ENCODE measurements at regions of chr5 and their contacts with region 1.

Region 1: GRCh38 chr5:103041071-103041676 is 78.8 kb downstream of the GIN1 start:
- DNase-seq: no peak
- ATAC-seq: peak in 1 of 2 donors; percentile 66
- H3K4me3 ChIP-seq: no peak overlapping the region
- H3K27ac ChIP-seq: no peak overlapping the region
- H3K4me1 ChIP-seq: no peaks in the 10 kb centered on the region
- H3K27me3 ChIP-seq: no peaks in the 10 kb centered on the region
- CTCF ChIP-seq: peak; percentile 50 to 71 (median 61)
- POLR2A ChIP-seq: no peak

Region 2: GRCh38 chr5:102536323-102536928 is 504.7 kb before region 1 on chr5:
- in situ Hi-C with region 1: no loop called
- intact Hi-C with region 1: loop called (anchors 2 kb)
- DNase-seq: no peak
- ATAC-seq: no peak
- H3K4me3 ChIP-seq: no peak overlapping the region
- H3K27ac ChIP-seq: no peak overlapping the region
- H3K4me1 ChIP-seq: no peaks in the 10 kb centered on the region
- H3K27me3 ChIP-seq: no peaks in the 10 kb centered on the region
- CTCF ChIP-seq: no peak
- POLR2A ChIP-seq: no peak

Region 3: DNA sequence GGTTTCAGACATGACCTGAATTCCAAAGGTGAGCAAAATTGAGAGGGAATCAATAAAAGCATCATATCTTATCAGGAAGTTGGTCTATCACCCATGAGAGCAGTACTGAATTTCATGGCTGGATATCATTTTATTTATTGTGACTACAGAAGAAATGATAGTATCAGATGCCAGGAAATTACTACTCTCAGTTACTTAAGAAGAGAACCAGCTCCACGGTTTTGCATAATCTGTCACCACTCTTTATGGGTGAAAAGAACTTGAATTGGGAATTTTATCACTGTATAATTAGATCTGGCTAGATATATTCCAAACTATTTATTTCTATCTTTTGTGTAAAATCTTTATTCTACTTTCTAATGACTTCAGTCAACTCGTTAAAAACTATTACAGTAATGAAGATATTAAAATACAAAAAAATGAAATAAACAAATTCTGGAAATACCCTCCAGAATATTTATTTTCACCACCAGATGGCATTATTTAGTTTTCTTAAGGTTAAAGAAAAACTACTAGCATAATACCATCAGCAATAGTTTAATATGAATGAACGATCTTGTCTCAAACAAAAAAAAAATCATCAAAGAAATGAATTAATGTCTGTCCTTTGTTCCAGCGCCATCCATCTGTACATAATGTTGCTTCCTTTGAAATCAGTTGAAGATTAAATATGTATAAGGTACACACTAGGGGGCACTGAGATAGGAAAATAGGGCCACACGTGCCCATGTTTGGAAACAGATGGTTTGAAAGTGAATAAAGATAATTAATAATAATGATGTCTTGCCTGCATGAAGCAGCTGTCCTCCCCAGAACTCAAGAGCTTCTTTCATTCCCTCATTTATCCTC is 457.7 kb before region 1 on chr5:
- in situ Hi-C with region 1: loop called in 3 of 4 experiments (anchors 5 to 25 kb)
- intact Hi-C with region 1: loop called (anchors 1 kb)
- DNase-seq: no peak
- ATAC-seq: no peak
- H3K4me3 ChIP-seq: no peak overlapping the region
- H3K27ac ChIP-seq: no peak overlapping the region
- H3K4me1 ChIP-seq: no peaks in the 10 kb centered on the region
- H3K27me3 ChIP-seq: no peaks in the 10 kb centered on the region
- CTCF ChIP-seq: peak in 4 of 5 experiments; percentile 16 to 42 (median 37)
- POLR2A ChIP-seq: no peak

Region 4: GRCh38 chr5:102589661-102590060 is 451.5 kb before region 1 on chr5:
- in situ Hi-C with region 1: loop called in 3 of 4 experiments (anchors 5 to 25 kb)
- intact Hi-C with region 1: loop called (anchors 1 kb)
- DNase-seq: no peak
- ATAC-seq: no peak
- H3K4me3 ChIP-seq: no peak overlapping the region
- H3K27ac ChIP-seq: no peak overlapping the region
- H3K4me1 ChIP-seq: no peaks in the 10 kb centered on the region
- H3K27me3 ChIP-seq: no peaks in the 10 kb centered on the region
- CTCF ChIP-seq: no peak
- POLR2A ChIP-seq: no peak

Region 5: DNA sequence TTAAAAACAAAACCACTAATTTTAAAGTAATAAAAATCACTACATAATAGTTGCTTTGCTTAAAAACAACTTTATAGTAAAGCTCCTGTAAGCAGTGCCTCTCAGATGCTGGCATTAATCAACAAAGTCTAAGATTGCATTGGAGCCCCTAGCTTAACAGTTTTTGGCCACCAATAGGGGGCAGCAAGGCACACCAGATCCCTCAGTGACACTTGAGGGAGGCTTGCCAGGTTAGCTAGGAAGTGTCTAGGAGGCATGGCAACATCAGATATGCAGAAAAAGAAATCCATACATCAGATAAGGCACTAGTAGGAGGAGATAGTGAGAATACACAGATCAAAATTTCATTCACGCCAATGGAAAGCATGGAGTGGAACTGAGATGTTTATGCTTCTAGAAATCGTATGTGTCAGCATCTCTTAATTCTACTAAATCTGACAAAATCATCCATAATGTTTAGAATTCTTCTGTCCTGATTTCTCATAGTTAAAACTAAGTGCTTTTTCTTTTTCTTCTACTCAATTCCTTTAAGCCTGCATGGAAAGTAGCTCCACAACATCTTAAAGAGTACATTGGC is 359.7 kb before region 1 on chr5:
- in situ Hi-C with region 1: loop called in 2 of 4 experiments (anchors 10 to 25 kb)
- intact Hi-C with region 1: loop called (anchors 1 kb)
- DNase-seq: peak; percentile 44 to 62
- ATAC-seq: peak; percentile 86 to 88
- H3K4me3 ChIP-seq: no peak overlapping the region
- H3K27ac ChIP-seq: no peak overlapping the region
- H3K4me1 ChIP-seq: no peaks in the 10 kb centered on the region
- H3K27me3 ChIP-seq: no peaks in the 10 kb centered on the region
- CTCF ChIP-seq: peak; percentile 54 to 79 (median 73)
- POLR2A ChIP-seq: no peak

Region 6: DNA sequence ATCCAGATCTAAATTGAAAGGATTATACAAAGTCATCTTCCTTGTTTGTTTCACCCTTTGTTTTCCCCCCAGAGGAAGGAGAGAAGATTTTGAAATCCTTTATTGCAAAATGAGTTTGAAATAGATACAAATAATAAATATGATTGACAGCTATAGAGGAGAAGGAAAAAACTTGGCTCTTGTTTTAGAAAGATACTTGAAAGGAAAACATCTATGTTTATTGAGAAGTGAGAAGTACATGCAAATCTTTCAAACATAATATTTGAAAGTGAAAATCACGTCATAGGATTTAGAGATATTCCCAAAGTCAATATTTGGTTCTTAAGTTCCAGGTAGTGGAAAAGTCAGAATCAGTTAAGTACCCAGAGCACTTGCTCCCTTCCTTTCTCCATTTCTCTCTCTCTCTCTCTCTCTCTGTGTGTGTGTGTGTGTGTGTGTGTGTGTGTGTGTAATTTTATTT is 258.8 kb before region 1 on chr5:
- in situ Hi-C with region 1: no loop called
- intact Hi-C with region 1: loop called (anchors 2 kb)
- DNase-seq: no peak
- ATAC-seq: peak; percentile 46 to 57
- H3K4me3 ChIP-seq: peak overlapping the region in 2 of 4 donors; percentile 6 to 11
- H3K27ac ChIP-seq: peak overlapping the region; percentile 65 to 78 (median 76)
- H3K4me1 ChIP-seq: peaks cover 49 to 59% of the 10 kb centered on the region in 2 donors
- H3K27me3 ChIP-seq: no peaks in the 10 kb centered on the region
- CTCF ChIP-seq: no peak
- POLR2A ChIP-seq: no peak

Region 7: DNA sequence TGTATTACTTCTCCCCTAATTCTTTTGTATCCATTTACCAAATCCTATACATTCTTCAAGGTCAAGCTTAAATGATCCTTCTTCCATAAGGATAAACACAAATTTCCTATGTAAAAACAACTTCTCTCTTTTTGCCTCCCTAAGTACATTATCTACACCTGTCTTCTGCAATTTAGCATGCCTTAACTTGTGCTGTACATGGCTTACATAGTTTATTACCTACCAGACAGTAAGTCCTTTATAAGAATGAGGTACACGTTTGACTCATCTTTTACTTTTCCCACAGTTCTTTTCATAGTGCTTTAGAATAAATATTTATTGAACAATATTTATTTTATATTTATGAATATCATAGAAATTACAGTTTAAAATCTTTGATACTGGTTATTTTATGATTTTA is 45.4 kb after region 1 on chr5:
- in situ Hi-C with region 1: no loop called
- intact Hi-C with region 1: no loop called
- DNase-seq: no peak
- ATAC-seq: no peak
- H3K4me3 ChIP-seq: no peak overlapping the region
- H3K27ac ChIP-seq: no peak overlapping the region
- H3K4me1 ChIP-seq: no peaks in the 10 kb centered on the region
- H3K27me3 ChIP-seq: no peaks in the 10 kb centered on the region
- CTCF ChIP-seq: no peak
- POLR2A ChIP-seq: no peak